ENCODE measurements at regions of chr11 and their contacts with region 1.

Region 1: DNA sequence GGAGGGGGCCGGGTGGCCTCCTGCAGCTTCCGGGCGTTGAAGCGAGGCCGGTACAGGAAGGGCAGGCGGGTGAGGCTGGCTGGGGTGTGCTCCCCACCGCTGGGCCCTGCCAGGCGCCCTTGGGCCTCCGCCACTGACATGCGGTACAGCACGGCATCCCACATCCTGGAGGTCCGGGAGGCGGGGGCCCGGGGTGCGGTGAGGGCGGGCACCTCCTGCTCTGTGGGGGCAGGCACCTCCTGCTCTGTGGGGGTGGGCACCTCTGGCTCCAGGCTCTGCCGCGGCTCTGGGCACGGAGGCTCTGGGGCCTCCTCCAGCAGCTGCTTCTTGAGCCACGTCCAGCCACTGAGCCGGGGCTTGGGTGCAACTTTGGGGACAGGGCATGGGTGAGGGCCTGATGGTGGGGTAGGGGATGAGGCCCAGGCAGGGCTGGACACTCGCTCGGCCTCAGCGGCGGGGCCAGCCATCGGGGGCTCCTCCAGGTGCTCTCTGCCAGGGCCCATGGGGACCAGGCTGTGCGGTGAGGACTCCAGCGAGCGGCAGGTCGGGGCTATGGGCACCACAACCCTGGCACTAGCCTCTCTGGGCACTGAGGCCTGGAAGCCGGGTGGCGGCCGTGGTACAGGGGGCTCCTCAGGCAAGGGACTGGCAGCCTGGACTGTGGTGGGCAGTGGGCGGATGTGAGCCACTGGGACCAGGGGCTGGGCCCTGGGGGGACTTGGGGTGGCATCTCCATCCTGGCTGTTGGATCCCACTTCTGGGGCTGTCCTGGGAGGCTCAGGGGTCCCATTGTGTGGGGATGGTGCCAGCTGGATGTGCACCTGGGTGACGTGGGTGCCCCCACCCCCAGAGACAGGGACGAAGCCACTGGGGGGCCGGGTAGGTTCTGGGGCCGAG is 2.2 kb downstream of the PRR33 start:
- DNase-seq: peak; percentile 84
- H3K4me3 Mint-ChIP-seq: peak overlapping the region; percentile 20
- H3K27ac Mint-ChIP-seq: peak overlapping the region; percentile 53
- H3K4me1 Mint-ChIP-seq: peaks cover 22% of the 10 kb centered on the region
- H3K27me3 Mint-ChIP-seq: no peaks in the 10 kb centered on the region

Region 2: GRCh38 chr11:1844221-1845094 is 45.0 kb before region 1 on chr11:
- CTCF ChIA-PET with region 1: no interaction called
- POLR2A ChIA-PET with region 1: no interaction called
- intact Hi-C with region 1: loop called (anchors 2 kb)
- DNase-seq: peak; percentile 77
- H3K4me3 Mint-ChIP-seq: peak overlapping the region; percentile 67
- H3K27ac Mint-ChIP-seq: peak overlapping the region; percentile 77
- H3K4me1 Mint-ChIP-seq: peaks cover 47% of the 10 kb centered on the region
- H3K27me3 Mint-ChIP-seq: no peaks in the 10 kb centered on the region

Measured in activated CD4-positive, alpha-beta memory T cell treated with anti-CD3 and anti-CD28 coated beads for 36 hours (primary cell).